Colonic mucosa (tissue), 4 donors: ENCODE measurements at regions of chr15 and their contacts with region 1.

Region 1: DNA sequence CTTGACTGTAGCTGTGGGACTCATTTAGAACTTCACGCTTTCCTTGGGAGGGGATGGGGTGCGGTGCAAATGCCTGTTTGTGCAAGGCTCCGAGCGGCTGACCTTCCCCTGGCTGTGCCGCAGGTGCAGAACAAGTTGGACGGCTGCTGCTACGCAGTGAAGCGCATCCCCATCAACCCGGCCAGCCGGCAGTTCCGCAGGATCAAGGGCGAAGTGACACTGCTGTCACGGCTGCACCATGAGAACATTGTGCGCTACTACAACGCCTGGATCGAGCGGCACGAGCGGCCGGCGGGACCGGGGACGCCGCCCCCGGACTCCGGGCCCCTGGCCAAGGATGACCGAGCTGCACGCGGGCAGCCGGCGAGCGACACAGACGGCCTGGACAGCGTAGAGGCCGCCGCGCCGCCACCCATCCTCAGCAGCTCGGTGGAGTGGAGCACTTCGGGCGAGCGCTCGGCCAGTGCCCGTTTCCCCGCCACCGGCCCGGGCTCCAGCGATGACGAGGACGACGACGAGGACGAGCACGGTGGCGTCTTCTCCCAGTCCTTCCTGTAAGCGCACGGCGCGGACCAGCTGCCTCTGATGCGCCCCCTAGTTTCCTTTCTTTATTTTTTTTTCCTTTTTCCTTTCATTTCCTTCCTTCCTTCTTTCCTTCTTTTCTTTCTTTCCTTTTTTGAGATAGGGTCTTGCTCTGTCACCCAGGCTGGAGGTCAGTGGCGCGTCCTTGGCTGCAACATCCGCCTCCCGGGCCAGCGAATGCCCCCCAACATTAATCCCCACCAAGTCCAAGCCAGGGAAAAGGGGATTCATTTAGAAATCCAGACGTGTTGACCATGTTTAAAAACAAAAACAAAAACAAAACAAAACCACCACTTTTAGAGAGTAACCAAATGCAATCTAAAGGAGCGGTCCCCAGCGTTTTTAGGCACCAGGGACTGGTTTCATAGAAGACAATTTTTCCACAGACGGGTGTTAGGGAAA is 42.7 kb downstream of the EIF2AK4 start:
- DNase-seq: peak; percentile 62
- H3K4me3 ChIP-seq: peak overlapping the region; percentile 44
- H3K27ac ChIP-seq: peak overlapping the region; percentile 16
- H3K4me1 ChIP-seq: no peaks in the 10 kb centered on the region
- H3K27me3 ChIP-seq: no peaks in the 10 kb centered on the region
- CTCF ChIP-seq: no peak

Region 2: DNA sequence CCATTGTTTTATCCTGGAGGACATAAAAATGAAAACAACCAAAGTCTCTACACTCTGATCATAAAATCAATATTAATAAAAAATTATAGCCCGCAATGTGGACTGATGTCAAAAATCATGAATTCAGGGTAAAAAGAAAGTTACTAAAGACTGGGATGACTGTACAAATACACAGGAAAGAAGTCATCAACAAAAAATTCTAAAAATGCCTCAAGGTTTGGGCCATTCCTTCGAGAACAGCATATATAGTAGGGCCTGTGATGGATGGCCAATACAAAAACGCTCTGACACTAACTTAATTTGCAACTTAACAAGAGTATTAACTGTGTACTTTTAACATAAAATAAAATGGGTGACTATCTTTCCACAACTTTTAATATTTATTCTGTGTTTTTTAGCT is 318.9 kb before region 1 on chr15:
- intact Hi-C with region 1: no loop called
- DNase-seq: no peak
- H3K4me3 ChIP-seq: no peak overlapping the region
- H3K27ac ChIP-seq: no peak overlapping the region
- H3K4me1 ChIP-seq: no peaks in the 10 kb centered on the region
- H3K27me3 ChIP-seq: no peaks in the 10 kb centered on the region
- CTCF ChIP-seq: no peak

Region 3: DNA sequence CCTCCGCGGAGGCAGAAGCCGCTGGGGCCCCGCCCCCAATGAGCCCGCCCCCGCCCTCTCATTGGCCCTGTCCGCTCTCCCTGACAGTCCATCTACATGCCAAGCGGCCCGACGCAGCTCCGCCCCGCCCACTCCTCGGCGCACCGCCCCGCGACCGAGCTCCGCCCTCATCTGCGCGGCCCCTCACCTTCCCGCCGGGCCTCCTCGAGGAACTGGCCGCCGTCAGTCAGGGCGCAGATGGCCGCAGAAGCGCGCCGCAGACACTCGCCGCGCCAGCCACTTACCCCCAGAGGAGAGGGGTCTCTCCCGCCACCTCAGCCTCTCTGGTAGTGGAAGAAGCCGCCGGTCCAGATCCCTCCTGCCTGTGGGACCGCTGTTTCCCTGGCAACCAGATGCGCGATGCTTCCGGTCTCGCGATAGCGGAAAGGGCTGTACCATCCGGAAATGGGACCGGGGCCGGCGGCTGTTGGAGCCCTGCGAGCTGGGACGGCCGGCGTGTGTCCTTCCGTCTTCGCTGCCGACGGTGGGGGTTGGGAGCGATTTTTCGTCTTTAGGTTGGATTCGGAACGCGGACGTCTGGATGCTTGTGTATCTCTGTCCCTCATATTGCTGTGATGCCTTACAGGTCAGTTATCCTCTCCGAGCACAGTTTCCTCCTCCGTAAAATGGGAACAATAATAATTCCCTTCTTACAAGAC is 194.0 kb before region 1 on chr15 and contains the start of gene FSIP1:
- intact Hi-C with region 1: loop called (anchors 10 kb)
- DNase-seq: peak; percentile 98
- H3K4me3 ChIP-seq: peak within 1 kb of the TSS; percentile 81
- H3K27ac ChIP-seq: peak within 1 kb of the TSS; percentile 82
- H3K4me1 ChIP-seq: no peaks in the 10 kb centered on the region
- H3K27me3 ChIP-seq: no peaks in the 10 kb centered on the region
- CTCF ChIP-seq: no peak
- total RNA-seq, gene FSIP1: 4.1 to 5.3 TPM

Region 4: GRCh38 chr15:39887832-39888231 is 88.8 kb before region 1 on chr15:
- intact Hi-C with region 1: loop called (anchors 5 kb)
- DNase-seq: peak; percentile 70
- H3K4me3 ChIP-seq: no peak overlapping the region
- H3K27ac ChIP-seq: peak overlapping the region; percentile 67
- H3K4me1 ChIP-seq: peaks cover 7% of the 10 kb centered on the region
- H3K27me3 ChIP-seq: no peaks in the 10 kb centered on the region
- CTCF ChIP-seq: no peak

Region 5: GRCh38 chr15:39944726-39945125 is 31.9 kb before region 1 on chr15:
- intact Hi-C with region 1: no loop called
- DNase-seq: no peak
- H3K4me3 ChIP-seq: no peak overlapping the region
- H3K27ac ChIP-seq: no peak overlapping the region
- H3K4me1 ChIP-seq: no peaks in the 10 kb centered on the region
- H3K27me3 ChIP-seq: no peaks in the 10 kb centered on the region
- CTCF ChIP-seq: no peak